ENCODE measurements at regions of chr1 and their contacts with region 1.

Region 1: GRCh38 chr1:147545133-147545532 is 3.8 kb downstream of the BCL9 start:
- DNase-seq: peak; percentile 64

Region 2: GRCh38 chr1:147611021-147611426 is 65.9 kb after region 1 on chr1:
- in situ Hi-C with region 1: loop called (anchors 10 kb)
- DNase-seq: no peak

Measured in ACHN (cell line).